CD4-positive, alpha-beta memory T cell (primary cell): ENCODE measurements at regions of chr16 and their contacts with region 1.

Region 1: GRCh38 chr16:4616047-4616811 is 1.5 kb upstream of the UBALD1 start:
- DNase-seq: peak; percentile 98 to 100 (median 99)
- H3K4me3 ChIP-seq: peak overlapping the region; percentile 65 to 79
- H3K4me3 Mint-ChIP-seq: peak overlapping the region; percentile 94 to 97 (median 95)
- H3K27ac ChIP-seq: peak overlapping the region; percentile 89
- H3K27ac Mint-ChIP-seq: peak overlapping the region; percentile 95 to 100 (median 99)
- H3K4me1 ChIP-seq: peaks cover 43% of the 10 kb centered on the region
- H3K4me1 Mint-ChIP-seq: peaks cover 5 to 39% (median 25%) of the 10 kb centered on the region in 4 donors
- H3K27me3 ChIP-seq: no peaks in the 10 kb centered on the region
- H3K27me3 Mint-ChIP-seq: no peaks in the 10 kb centered on the region

Region 2: DNA sequence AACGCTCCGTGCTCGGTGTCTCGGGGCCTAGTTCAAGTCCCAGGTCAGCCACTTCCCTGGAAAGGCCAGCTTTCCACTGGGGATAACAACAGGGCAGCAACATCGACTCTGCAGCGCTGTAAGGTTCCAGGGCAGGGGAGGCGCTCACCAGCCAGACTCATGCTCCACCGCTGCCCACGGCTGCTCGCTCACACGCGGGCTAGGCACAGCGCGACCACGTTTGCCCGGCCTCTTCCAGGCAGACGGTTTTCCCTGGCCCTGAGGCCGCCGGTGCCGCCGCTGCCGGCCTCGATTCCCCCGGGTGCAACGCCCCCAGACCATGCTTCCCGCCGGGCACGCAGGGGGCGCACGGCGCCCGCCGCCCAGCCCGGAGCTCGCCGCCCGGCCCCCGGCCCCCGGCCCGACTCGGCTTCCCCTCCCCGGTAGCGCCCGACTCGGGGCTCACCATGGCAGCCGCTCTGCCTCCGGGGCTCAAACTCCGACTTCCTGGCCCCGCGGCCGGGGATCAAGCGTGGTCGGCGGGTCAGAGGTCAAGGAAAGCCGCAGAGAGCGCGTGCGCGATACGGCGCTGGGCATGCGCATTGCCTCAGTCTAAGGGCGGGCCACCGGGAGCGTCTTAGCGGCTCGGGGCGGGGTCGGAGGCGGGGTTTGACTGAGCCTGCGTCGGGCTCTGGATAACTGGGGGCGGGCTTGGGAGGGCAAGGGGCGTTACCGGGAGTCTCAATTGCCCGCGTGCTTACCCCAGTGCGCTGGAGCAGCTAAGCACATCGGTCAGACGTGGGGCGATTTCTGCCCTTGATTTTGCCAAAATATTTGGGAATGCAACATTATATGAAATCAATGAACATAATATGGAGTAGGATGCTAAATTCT is 265.2 kb before region 1 on chr16 and contains the start of gene PAM16:
- CTCF ChIA-PET with region 1: no interaction called
- POLR2A ChIA-PET with region 1: no interaction called
- intact Hi-C with region 1: loop called (anchors 2 kb)
- DNase-seq: peak; percentile 95 to 99 (median 97)
- H3K4me3 ChIP-seq: peak within 1 kb of the TSS; percentile 73 to 92
- H3K4me3 Mint-ChIP-seq: peak within 1 kb of the TSS; percentile 91 to 97 (median 94)
- H3K27ac ChIP-seq: peak within 1 kb of the TSS; percentile 79
- H3K27ac Mint-ChIP-seq: peak within 1 kb of the TSS; percentile 92 to 97 (median 94)
- H3K4me1 ChIP-seq: peaks cover 27% of the 10 kb centered on the region
- H3K4me1 Mint-ChIP-seq: peaks cover 16 to 43% (median 24%) of the 10 kb centered on the region in 4 donors
- H3K27me3 ChIP-seq: no peaks in the 10 kb centered on the region
- H3K27me3 Mint-ChIP-seq: no peaks in the 10 kb centered on the region
- total RNA-seq, gene PAM16: 38.6 to 54.8 TPM

Region 3: DNA sequence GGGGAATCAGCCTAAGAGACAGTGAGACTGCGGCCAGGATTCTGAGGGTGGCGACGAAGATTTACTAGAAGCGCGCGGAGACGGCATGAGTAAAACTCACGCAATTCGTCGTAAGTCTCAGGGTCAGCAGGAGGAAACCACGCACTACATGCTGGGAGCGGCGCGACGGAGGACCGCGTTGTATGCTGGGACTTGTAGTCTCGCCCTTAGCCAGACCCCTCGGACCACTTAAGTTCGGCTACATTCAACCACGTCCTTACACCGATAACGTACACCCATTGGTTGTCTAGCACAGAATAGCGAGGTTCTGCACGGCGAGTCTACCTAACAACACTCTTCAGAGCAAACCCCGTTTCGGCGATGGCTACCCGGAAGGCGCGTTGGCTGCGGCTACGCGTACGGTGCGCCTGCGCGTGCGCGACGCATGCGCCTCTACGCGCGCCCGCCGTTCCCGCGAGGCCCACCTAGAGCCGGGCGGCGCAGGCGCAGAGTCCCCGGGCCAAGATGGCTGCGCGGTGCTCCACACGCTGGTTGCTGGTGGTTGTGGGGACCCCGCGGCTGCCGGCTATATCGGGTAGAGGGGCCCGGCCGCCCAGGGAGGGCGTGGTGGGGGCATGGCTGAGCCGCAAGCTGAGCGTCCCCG is 190.7 kb before region 1 on chr16 and contains the start of gene DNAJA3:
- CTCF ChIA-PET with region 1: no interaction called
- POLR2A ChIA-PET with region 1: no interaction called
- intact Hi-C with region 1: loop called (anchors 1 kb)
- DNase-seq: peak; percentile 93 to 96 (median 95)
- H3K4me3 ChIP-seq: peak within 1 kb of the TSS; percentile 98 to 99
- H3K4me3 Mint-ChIP-seq: peak within 1 kb of the TSS; percentile 92 to 98 (median 98)
- H3K27ac ChIP-seq: peak within 1 kb of the TSS; percentile 98
- H3K27ac Mint-ChIP-seq: peak within 1 kb of the TSS; percentile 98 to 100 (median 100)
- H3K4me1 ChIP-seq: peaks cover 28% of the 10 kb centered on the region
- H3K4me1 Mint-ChIP-seq: peaks cover 16 to 36% (median 24%) of the 10 kb centered on the region in 4 donors
- H3K27me3 ChIP-seq: no peaks in the 10 kb centered on the region
- H3K27me3 Mint-ChIP-seq: no peaks in the 10 kb centered on the region
- total RNA-seq, gene DNAJA3: 67.5 to 71.1 TPM

Region 4: DNA sequence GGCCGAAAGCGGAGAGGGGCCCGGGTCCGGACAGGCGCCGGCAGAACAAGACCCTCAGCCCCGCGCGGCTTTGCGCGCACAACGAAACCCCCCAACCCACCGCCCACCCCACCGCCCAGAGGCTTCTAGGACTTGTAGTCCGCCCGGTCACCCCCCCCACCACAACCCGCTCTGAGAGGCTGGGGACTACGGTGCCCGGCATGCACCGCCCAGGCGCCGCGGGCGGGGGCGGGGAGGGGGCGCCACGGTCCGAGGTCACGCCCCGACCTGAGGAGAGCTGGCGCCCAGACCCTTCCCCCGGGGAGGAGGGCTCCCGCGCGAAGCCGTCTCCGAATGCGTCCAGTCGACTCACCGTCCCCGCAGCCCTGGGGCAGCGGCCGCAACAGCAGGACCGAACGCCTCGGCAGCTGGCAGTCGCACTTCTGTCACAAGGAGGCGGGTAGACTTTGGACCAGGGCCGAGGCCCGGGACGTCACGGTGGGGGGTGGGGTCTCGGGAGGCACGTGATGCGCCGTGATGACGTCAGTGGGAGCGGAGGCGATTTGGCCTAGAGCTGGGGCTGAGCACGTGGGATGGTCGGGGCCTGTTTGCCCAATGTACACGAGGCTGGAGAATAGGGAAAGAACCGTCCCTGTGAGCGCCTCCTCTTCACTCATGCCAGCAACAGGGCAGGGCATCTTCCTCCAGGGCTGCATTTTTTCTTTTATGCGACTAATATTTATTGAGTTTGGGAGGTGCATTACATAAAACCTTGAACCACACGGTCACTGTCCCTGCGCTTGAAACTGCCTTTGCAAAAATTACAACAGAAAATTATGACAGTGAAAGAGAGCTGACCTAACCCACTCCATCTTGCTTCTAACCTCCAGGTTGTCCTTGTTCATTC is 77.6 kb before region 1 on chr16 and contains the start of gene CDIP1:
- CTCF ChIA-PET with region 1: no interaction called
- POLR2A ChIA-PET with region 1: interaction called, 9 read pairs
- intact Hi-C with region 1: loop called (anchors 2 kb)
- DNase-seq: peak; percentile 89 to 94 (median 90)
- H3K4me3 ChIP-seq: peak within 1 kb of the TSS; percentile 69 to 92
- H3K4me3 Mint-ChIP-seq: peak within 1 kb of the TSS; percentile 82 to 89 (median 84)
- H3K27ac ChIP-seq: peak within 1 kb of the TSS; percentile 77
- H3K27ac Mint-ChIP-seq: peak within 1 kb of the TSS; percentile 89 to 97 (median 94)
- H3K4me1 ChIP-seq: peaks cover 30% of the 10 kb centered on the region
- H3K4me1 Mint-ChIP-seq: peaks cover 18 to 35% (median 27%) of the 10 kb centered on the region in 4 donors
- H3K27me3 ChIP-seq: no peaks in the 10 kb centered on the region
- H3K27me3 Mint-ChIP-seq: no peaks in the 10 kb centered on the region
- total RNA-seq, gene CDIP1: 19.0 to 21.1 TPM

Region 5: GRCh38 chr16:4734063-4734729 is 118.0 kb after region 1 on chr16 and contains the starts of genes ANKS3 and DNAAF8:
- CTCF ChIA-PET with region 1: interaction called, 7 read pairs
- POLR2A ChIA-PET with region 1: interaction called, 22 read pairs
- intact Hi-C with region 1: loop called (anchors 1 kb)
- DNase-seq: peak; percentile 76 to 84 (median 78)
- H3K4me3 ChIP-seq: peak within 1 kb of the TSS; percentile 88 to 99
- H3K4me3 Mint-ChIP-seq: peak within 1 kb of the TSS; percentile 91 to 94 (median 92)
- H3K27ac ChIP-seq: peak within 1 kb of the TSS; percentile 76
- H3K27ac Mint-ChIP-seq: peak within 1 kb of the TSS; percentile 90 to 96 (median 93)
- H3K4me1 ChIP-seq: peaks cover 15% of the 10 kb centered on the region
- H3K4me1 Mint-ChIP-seq: peaks cover 11 to 30% (median 21%) of the 10 kb centered on the region in 4 donors
- H3K27me3 ChIP-seq: no peaks in the 10 kb centered on the region
- H3K27me3 Mint-ChIP-seq: no peaks in the 10 kb centered on the region
- total RNA-seq, gene ANKS3: 28.5 to 33.9 TPM
- total RNA-seq, gene DNAAF8: 0.12 to 0.64 TPM

Region 6: DNA sequence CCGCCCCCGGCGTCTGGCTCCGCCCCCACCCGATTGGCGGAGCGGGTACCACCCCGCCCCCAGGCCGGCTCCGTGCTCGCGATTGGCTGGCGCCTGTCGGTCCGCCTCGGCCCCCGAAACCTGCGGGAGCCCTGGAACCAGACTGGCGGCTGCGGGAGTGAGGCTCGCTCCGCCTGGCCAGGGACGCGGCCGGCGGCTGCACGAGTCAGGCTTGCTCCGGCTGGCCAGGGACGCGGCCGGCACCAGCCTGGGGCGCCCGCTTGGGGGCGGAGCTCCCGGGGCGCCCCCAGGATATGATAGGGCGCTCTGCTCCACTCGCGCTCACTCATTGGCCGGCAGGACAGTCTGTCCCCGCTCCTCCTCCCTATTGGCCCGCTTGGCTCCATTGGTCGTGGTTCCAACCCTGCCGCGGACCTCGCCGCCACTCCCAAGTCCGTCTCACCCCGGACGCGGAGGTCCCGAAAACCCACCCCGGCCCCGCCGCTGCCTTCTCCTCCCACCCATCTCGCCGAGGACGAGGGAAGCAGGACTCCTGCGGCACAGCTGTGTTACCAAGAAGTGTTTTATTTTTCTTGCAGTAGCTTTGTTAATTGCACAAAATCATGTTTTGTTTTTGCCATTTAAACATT is 186.5 kb after region 1 on chr16:
- CTCF ChIA-PET with region 1: no interaction called
- POLR2A ChIA-PET with region 1: interaction called, 3 read pairs
- intact Hi-C with region 1: loop called (anchors 10 kb)
- DNase-seq: peak; percentile 88 to 97 (median 92)
- H3K4me3 ChIP-seq: peak overlapping the region; percentile 52 to 58
- H3K4me3 Mint-ChIP-seq: peak overlapping the region; percentile 82 to 90 (median 85)
- H3K27ac ChIP-seq: peak overlapping the region; percentile 72
- H3K27ac Mint-ChIP-seq: peak overlapping the region; percentile 66 to 97 (median 82)
- H3K4me1 ChIP-seq: peaks cover 18% of the 10 kb centered on the region
- H3K4me1 Mint-ChIP-seq: peaks cover 1 to 25% (median 11%) of the 10 kb centered on the region in 4 donors
- H3K27me3 ChIP-seq: no peaks in the 10 kb centered on the region
- H3K27me3 Mint-ChIP-seq: no peaks in the 10 kb centered on the region

Region 7: GRCh38 chr16:4957720-4958509 is 341.7 kb after region 1 on chr16 and contains the start of gene SEC14L5:
- CTCF ChIA-PET with region 1: no interaction called
- POLR2A ChIA-PET with region 1: interaction called, 3 read pairs
- intact Hi-C with region 1: loop called (anchors 1 kb)
- DNase-seq: peak; percentile 86 to 96 (median 89)
- H3K4me3 ChIP-seq: peak within 1 kb of the TSS; percentile 23 to 45
- H3K4me3 Mint-ChIP-seq: peak within 1 kb of the TSS; percentile 78 to 92 (median 86)
- H3K27ac ChIP-seq: no peak within 1 kb of the TSS
- H3K27ac Mint-ChIP-seq: peak within 1 kb of the TSS; percentile 1 to 77 (median 57)
- H3K4me1 ChIP-seq: peaks cover 16% of the 10 kb centered on the region
- H3K4me1 Mint-ChIP-seq: peaks cover 12 to 28% (median 20%) of the 10 kb centered on the region in 4 donors
- H3K27me3 ChIP-seq: peaks cover 11% of the 10 kb centered on the region
- H3K27me3 Mint-ChIP-seq: peaks cover 21 to 30% of the 10 kb centered on the region in 2 donors
- total RNA-seq, gene SEC14L5: not detected